Panc1 (cell line): ENCODE measurements at regions of chr4 and their contacts with region 1.

Region 1: DNA sequence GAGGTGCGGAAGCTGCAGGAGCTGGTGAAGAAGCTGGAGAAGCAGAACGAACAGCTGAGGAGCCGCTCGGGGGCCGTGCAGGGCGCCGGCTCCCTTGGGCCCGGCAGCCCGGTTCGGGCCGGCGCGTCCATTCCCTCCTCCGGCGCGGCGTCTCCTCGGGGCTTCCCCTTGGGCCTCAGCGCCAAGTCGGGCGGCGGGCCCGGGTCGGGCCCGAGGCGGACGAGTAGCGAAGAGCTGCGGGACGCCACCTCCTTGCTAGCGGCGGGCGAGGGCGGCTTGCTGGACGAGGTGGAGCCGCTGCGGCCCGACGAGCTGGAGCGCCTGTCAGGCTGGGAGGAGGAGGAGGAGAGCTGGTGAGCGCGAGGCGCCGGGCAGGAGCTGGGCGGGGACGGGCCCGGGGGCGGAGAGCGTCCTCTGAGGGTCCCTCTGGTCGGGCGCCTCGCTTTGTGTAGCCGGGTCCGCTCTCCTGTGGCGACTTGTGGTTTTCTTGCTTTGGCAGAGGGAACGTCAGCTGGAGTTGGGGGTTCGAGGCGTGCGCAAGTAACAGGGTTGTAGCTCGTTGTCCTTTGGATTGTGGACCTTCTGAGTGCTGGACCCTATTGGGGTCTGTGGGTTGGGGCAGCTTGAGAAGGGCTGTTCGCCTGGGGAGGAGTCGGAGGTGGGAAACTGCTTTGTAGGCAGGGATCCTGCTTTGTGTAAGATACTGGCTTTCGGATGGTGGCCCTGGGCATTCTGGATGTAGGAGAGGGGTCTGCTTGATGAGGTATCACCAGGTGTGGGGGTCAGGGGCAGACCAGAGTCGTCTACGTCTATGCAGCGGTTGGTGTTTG is 662 bp downstream of the SLAIN2 start:
- DNase-seq: no peak
- ATAC-seq: peak; percentile 42
- H3K4me3 ChIP-seq: peak overlapping the region; percentile 84 to 90
- H3K27ac ChIP-seq: peak overlapping the region; percentile 72
- H3K4me1 ChIP-seq: peaks cover 9% of the 10 kb centered on the region; the same call in 1 of the 2 replicates
- H3K27me3 ChIP-seq: no peaks in the 10 kb centered on the region
- CTCF ChIP-seq: no peak

Region 2: GRCh38 chr4:48275247-48275646 is 66.7 kb before region 1 on chr4:
- CTCF ChIA-PET with region 1: no interaction called
- POLR2A ChIA-PET with region 1: interaction called, 10 read pairs
- in situ Hi-C with region 1: no loop called
- intact Hi-C with region 1: no loop called
- DNase-seq: no peak
- ATAC-seq: 0 out of 2 replicates have a peak, but pooled peaks have one; percentile 45
- H3K4me3 ChIP-seq: no peak overlapping the region
- H3K27ac ChIP-seq: no peak overlapping the region
- H3K4me1 ChIP-seq: no peaks in the 10 kb centered on the region
- H3K27me3 ChIP-seq: no peaks in the 10 kb centered on the region
- CTCF ChIP-seq: peak; percentile 65

Region 3: GRCh38 chr4:48356355-48356754 is 14.4 kb after region 1 on chr4:
- CTCF ChIA-PET with region 1: interaction called, 4 read pairs
- POLR2A ChIA-PET with region 1: interaction called, 16 read pairs
- in situ Hi-C with region 1: no loop called
- intact Hi-C with region 1: no loop called
- DNase-seq: no peak
- ATAC-seq: no peak
- H3K4me3 ChIP-seq: no peak overlapping the region
- H3K27ac ChIP-seq: no peak overlapping the region
- H3K4me1 ChIP-seq: no peaks in the 10 kb centered on the region
- H3K27me3 ChIP-seq: no peaks in the 10 kb centered on the region
- CTCF ChIP-seq: no peak

Region 4: GRCh38 chr4:48370260-48371134 is 28.5 kb after region 1 on chr4:
- CTCF ChIA-PET with region 1: no interaction called
- POLR2A ChIA-PET with region 1: interaction called, 11 read pairs
- in situ Hi-C with region 1: no loop called
- intact Hi-C with region 1: no loop called
- DNase-seq: no peak
- ATAC-seq: no peak
- H3K4me3 ChIP-seq: no peak overlapping the region
- H3K27ac ChIP-seq: no peak overlapping the region
- H3K4me1 ChIP-seq: 0 out of 2 replicates have a peak, but pooled peaks cover under 1% of the 10 kb centered on the region
- H3K27me3 ChIP-seq: no peaks in the 10 kb centered on the region
- CTCF ChIP-seq: no peak